ENCODE measurements at regions of chr2 and their contacts with region 1.

Region 1: GRCh38 chr2:97663965-97664635 is at the start of gene ACTR1B:
- DNase-seq: peak; percentile 99
- ATAC-seq: peak; percentile 77
- H3K4me3 Mint-ChIP-seq: peak within 1 kb of the TSS; percentile 88
- H3K27ac Mint-ChIP-seq: peak within 1 kb of the TSS; percentile 95
- H3K4me1 Mint-ChIP-seq: peaks cover 36% of the 10 kb centered on the region
- H3K27me3 Mint-ChIP-seq: no peaks in the 10 kb centered on the region
- total RNA-seq, gene ACTR1B: 92.0 to 124 TPM

Region 2: GRCh38 chr2:96536445-96537065 is 1127.5 kb before region 1 on chr2 and contains the start of gene ARID5A:
- CTCF ChIA-PET with region 1: no interaction called
- POLR2A ChIA-PET with region 1: no interaction called
- intact Hi-C with region 1: loop called in 1 of 2 experiments (anchors 5 kb)
- DNase-seq: peak; percentile 97
- ATAC-seq: peak; percentile 66
- H3K4me3 Mint-ChIP-seq: peak within 1 kb of the TSS; percentile 97
- H3K27ac Mint-ChIP-seq: peak within 1 kb of the TSS; percentile 90
- H3K4me1 Mint-ChIP-seq: peaks cover 64% of the 10 kb centered on the region
- H3K27me3 Mint-ChIP-seq: no peaks in the 10 kb centered on the region
- total RNA-seq, gene ARID5A: 179 to 191 TPM

Region 3: DNA sequence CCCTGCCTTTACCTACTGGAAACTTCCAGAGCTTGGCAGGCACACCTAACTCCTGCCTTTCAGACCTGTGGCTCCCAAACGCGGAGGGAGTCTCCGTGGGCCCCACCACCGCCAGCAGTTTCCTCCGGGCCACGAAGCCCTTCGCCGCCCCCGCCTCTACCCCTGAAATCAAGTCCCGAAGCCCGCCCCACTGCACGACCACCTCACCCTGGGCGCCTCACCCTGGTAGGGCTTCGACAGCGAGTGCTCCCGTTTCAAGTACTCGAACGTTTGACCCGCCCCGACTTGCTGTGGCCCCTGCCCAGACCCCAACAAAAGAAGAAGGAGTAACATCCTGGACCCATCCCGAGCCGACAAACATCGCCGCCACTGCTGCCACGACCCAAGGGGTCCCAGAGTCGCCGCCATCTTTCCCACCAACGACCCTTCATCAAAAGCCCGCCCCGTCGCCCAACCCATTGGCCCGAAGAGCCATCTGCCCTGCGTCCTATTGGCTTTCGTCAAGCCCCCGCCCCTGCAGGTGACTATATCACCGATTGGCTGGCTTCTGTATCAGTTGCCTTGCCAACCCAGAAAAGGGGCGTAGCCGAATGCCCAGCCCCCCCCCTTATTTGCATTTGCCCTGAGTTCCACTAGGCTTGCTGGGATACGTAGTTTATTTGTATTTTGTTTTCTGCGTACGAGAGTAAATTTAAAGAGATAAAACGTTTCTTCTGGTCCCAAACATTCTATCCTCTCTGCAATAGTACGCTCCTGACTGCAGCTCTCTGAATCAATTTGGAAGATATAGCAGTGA is 924.3 kb before region 1 on chr2 and contains the start of gene LMAN2L:
- CTCF ChIA-PET with region 1: no interaction called
- POLR2A ChIA-PET with region 1: no interaction called
- intact Hi-C with region 1: loop called in 1 of 2 experiments (anchors 10 kb)
- DNase-seq: peak; percentile 98
- ATAC-seq: peak; percentile 100
- H3K4me3 Mint-ChIP-seq: peak within 1 kb of the TSS; percentile 98
- H3K27ac Mint-ChIP-seq: peak within 1 kb of the TSS; percentile 84
- H3K4me1 Mint-ChIP-seq: peaks cover 40% of the 10 kb centered on the region
- H3K27me3 Mint-ChIP-seq: no peaks in the 10 kb centered on the region
- total RNA-seq, gene LMAN2L: 4.8 to 5.7 TPM

Region 4: GRCh38 chr2:97645695-97646629 is 18.1 kb before region 1 on chr2 and contains the start of gene COX5B:
- CTCF ChIA-PET with region 1: interaction called, 27 read pairs
- POLR2A ChIA-PET with region 1: interaction called, 96 read pairs
- intact Hi-C with region 1: loop called (anchors 1 kb)
- DNase-seq: peak; percentile 99
- ATAC-seq: peak; percentile 96
- H3K4me3 Mint-ChIP-seq: peak within 1 kb of the TSS; percentile 87
- H3K27ac Mint-ChIP-seq: peak within 1 kb of the TSS; percentile 98
- H3K4me1 Mint-ChIP-seq: peaks cover 14% of the 10 kb centered on the region
- H3K27me3 Mint-ChIP-seq: no peaks in the 10 kb centered on the region
- total RNA-seq, gene COX5B: 189 to 220 TPM

Region 5: DNA sequence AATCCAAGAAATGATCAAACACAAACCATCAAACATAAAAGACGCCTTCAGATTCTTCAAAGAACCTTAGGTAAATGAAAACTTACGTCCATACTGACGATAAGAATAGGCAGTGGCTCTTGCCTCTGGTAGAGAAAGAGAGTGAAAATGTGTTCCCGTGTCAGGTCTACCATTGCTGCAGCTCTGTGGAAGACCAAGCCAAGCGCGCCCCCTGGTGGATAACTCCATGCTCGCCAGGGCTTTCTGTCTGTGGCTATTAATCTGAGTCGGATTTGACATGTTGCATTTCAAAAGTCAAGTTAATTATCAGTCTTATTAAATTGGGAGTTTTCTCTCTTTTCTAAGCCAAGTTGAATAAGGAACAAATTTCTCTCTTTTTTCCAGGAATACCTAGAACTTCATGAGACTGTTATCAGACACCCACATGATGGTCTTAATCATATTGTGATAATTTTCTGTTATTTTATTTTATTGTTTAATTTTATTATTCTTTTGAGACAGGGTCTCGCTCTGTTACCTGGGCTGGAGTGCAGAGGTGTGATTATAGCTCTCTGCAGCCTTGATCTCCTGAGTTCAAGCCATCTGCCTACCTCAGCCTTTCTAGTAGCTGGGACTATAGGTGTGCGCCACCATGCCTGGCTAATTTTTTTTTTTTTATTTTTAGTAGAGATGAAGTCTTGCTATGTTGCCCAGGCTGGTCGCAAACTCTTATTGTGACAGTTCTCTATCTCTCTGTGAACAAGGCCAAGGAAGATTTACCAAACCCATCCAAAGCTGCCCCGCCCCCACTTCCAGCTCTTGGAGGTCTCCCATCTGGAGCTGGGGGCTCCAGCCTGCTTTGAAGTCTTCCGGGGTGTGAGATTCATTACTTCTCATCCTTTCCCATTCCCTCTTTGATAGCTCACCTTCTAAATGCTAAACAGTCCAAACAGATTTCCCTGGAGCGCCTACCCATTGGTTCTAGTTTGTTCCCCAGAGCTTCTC is 33.4 kb after region 1 on chr2:
- CTCF ChIA-PET with region 1: interaction called, 95 read pairs
- POLR2A ChIA-PET with region 1: interaction called, 5 read pairs
- intact Hi-C with region 1: loop called (anchors 1 kb)
- DNase-seq: peak; percentile 97
- ATAC-seq: peak; percentile 92
- H3K4me3 Mint-ChIP-seq: no peak overlapping the region
- H3K27ac Mint-ChIP-seq: peak overlapping the region; percentile 1
- H3K4me1 Mint-ChIP-seq: peaks cover 11% of the 10 kb centered on the region
- H3K27me3 Mint-ChIP-seq: no peaks in the 10 kb centered on the region

Region 6: GRCh38 chr2:97995734-97996624 is 331.9 kb after region 1 on chr2 and contains the start of gene TMEM131:
- CTCF ChIA-PET with region 1: no interaction called
- POLR2A ChIA-PET with region 1: no interaction called
- intact Hi-C with region 1: loop called in 1 of 2 experiments (anchors 1 kb)
- DNase-seq: peak; percentile 97
- ATAC-seq: peak; percentile 84
- H3K4me3 Mint-ChIP-seq: peak within 1 kb of the TSS; percentile 85
- H3K27ac Mint-ChIP-seq: peak within 1 kb of the TSS; percentile 97
- H3K4me1 Mint-ChIP-seq: peaks cover 35% of the 10 kb centered on the region
- H3K27me3 Mint-ChIP-seq: no peaks in the 10 kb centered on the region
- total RNA-seq, gene TMEM131: 25.8 to 32.5 TPM

Region 7: DNA sequence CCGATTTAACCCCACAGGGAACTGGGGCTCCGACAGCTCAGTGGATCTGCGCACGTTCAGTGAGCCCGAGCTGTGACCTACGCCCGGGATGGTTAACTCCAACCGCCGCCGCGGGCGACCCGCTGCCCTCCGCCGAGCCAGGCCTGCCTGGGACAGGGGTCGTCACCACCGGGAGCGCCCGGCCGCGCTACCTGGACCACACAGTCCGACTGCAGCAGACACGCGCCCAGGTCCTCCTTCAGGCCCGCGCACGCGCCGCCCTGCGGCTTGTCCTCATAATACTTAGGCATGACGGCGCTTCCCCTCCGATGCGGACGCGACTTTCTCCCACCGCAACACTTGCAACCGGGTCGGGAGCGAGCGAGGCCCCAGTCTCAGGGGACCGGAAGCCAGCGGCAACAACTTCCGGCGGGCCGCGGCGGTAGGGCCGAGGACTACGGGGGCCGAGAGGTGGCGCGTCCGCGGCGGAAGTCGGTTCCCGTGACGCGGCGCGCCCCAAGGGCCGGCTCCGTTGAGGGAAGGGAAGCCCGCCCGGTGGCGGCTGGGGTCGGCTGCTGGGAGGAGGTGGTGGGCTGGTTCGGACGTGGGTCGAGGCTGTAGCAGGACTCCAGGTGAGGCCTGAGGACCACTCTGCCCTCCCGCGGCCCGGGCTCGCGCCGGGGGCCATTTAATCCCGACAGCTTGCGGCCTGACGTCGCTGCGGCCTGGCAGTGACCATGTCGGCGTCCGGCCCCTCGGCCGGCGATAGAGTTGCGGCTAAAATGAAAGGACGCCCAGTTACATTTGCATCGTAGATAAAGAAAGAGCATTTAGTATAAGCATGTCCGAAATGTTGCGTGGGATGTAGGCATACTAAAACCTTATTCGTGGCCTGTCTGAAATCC is 944.3 kb after region 1 on chr2 and contains the starts of genes COA5 and UNC50:
- CTCF ChIA-PET with region 1: no interaction called
- POLR2A ChIA-PET with region 1: no interaction called
- intact Hi-C with region 1: loop called in 1 of 2 experiments (anchors 5 kb)
- DNase-seq: peak; percentile 95
- ATAC-seq: peak; percentile 91
- H3K4me3 Mint-ChIP-seq: peak within 1 kb of the TSS; percentile 83
- H3K27ac Mint-ChIP-seq: peak within 1 kb of the TSS; percentile 94
- H3K4me1 Mint-ChIP-seq: peaks cover 61% of the 10 kb centered on the region
- H3K27me3 Mint-ChIP-seq: no peaks in the 10 kb centered on the region
- total RNA-seq, gene COA5: 17.7 to 33.2 TPM
- total RNA-seq, gene UNC50: 21.1 to 31.4 TPM